Dorsolateral prefrontal cortex (tissue), 120 donors: ENCODE measurements at regions of chr3 and their contacts with region 1.

Region 1: DNA sequence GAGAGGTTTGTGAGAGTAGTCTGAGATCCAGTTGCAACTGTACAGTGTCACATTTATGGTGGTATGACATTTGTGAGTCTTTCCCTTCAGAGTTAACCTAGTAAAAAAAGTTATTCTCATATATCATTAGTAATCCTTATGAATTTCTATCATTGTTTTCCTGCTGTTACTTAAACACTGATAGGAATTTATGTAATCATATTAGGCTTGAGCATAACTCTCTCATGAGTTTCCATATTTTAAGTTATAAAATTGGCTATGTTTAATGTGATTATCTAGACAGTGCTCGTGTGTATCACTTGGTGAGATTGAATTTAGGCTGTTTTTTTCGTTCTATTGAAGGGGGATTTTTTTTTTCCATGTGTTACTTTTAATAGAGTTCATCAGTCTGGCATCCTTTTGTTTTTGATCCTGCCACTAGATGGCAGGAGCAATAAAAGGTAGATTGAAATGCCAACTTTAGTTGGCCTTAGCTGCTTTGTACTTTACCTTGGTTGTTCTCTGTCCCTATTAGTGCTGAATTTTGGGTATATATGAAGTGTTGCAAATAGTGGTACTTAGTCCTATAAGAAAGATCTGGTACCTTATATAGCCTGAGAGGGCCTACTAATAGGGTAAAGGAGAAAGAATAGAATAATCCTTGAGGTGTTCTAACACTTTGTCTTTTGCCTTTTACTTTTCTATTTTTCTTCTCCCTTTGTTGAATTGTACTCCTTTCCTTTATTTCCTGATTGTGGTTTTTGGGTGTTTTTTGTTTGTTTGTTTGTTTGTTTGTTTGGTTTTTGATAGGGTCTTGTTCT is 17.9 kb downstream of the STT3B start:
- DNase-seq: no peak
- H3K4me3 ChIP-seq: no peak overlapping the region
- H3K27ac ChIP-seq: no peak overlapping the region
- H3K27me3 ChIP-seq: no peaks in the 10 kb centered on the region
- CTCF ChIP-seq: peak; percentile 48 to 84 (median 70)

Region 2: DNA sequence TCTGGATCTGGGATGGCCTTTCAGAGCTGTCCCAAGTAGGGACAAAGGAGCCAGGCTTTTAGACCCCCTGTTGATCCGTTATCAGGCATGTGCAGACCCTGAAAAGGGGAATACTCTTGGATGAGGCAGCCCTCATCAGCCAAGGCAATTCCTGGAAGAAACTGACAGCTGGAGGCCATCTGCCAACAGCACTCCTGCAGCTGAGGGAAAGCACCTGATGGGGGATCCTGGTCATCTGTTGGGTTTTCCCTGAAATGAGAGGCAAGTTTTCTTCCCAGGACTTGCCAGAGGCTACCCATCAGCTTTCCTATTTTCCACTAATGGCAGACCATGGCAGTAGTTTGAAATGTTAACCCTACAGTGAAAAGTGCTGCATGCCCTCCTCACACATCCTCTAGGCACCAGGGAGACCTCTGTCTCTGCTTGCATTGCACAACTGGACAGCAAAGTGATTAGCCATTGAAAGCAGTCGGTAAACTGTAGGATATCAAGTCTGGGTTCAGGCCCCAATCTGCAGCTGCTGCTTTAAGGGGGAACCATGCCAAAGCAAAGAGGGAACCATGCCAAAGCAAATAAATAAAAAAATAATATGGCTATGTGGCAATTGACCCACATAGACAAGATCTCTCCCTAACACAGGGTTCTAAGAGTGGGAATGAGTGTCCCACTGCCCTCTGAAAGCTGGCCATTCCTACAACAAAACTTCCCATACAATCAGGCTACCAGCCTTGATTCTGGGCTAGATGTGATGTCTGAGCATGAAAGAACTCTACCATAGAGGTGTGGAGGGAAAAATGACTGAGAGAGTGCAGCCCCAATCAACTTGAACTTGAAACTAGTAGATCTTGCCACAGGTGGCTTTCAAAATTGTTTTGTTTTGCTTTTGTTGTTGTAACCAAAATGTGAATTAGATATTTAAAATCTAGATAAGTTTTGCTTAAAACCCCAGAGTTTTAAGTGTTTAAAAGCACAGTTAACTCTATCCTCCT is 249.9 kb before region 1 on chr3:
- intact Hi-C with region 1: no loop called
- DNase-seq: no peak
- H3K4me3 ChIP-seq: no peak overlapping the region
- H3K27ac ChIP-seq: no peak overlapping the region
- H3K27me3 ChIP-seq: no peaks in the 10 kb centered on the region
- CTCF ChIP-seq: no peak

Region 3: GRCh38 chr3:31423482-31423881 is 127.2 kb before region 1 on chr3:
- intact Hi-C with region 1: no loop called
- DNase-seq: no peak
- H3K4me3 ChIP-seq: no peak overlapping the region
- H3K27ac ChIP-seq: no peak overlapping the region
- H3K27me3 ChIP-seq: no peaks in the 10 kb centered on the region
- CTCF ChIP-seq: no peak

Region 4: GRCh38 chr3:31485196-31485595 is 65.5 kb before region 1 on chr3:
- intact Hi-C with region 1: no loop called
- DNase-seq: no peak
- H3K4me3 ChIP-seq: no peak overlapping the region
- H3K27ac ChIP-seq: no peak overlapping the region
- H3K27me3 ChIP-seq: peaks cover 0 to 9% (median 0%) of the 10 kb centered on the region in 45 donors
- CTCF ChIP-seq: no peak

Region 5: GRCh38 chr3:31768479-31769123 is 217.9 kb after region 1 on chr3:
- intact Hi-C with region 1: loop called in 1 of 2 experiments (anchors 5 kb)
- DNase-seq: peak in 7 of 10 donors; percentile 21 to 63 (median 45)
- H3K4me3 ChIP-seq: peak overlapping the region in 1 of 59 donors; percentile 19
- H3K27ac ChIP-seq: no peak overlapping the region
- H3K27me3 ChIP-seq: no peaks in the 10 kb centered on the region
- CTCF ChIP-seq: peak in 54 of 56 donors; percentile 29 to 85 (median 64)